Activated CD4-positive, alpha-beta memory T cell treated with anti-CD3 and anti-CD28 coated beads for 36 hours (primary cell): ENCODE measurements at regions of chr17 and their contacts with region 1.

Region 1: DNA sequence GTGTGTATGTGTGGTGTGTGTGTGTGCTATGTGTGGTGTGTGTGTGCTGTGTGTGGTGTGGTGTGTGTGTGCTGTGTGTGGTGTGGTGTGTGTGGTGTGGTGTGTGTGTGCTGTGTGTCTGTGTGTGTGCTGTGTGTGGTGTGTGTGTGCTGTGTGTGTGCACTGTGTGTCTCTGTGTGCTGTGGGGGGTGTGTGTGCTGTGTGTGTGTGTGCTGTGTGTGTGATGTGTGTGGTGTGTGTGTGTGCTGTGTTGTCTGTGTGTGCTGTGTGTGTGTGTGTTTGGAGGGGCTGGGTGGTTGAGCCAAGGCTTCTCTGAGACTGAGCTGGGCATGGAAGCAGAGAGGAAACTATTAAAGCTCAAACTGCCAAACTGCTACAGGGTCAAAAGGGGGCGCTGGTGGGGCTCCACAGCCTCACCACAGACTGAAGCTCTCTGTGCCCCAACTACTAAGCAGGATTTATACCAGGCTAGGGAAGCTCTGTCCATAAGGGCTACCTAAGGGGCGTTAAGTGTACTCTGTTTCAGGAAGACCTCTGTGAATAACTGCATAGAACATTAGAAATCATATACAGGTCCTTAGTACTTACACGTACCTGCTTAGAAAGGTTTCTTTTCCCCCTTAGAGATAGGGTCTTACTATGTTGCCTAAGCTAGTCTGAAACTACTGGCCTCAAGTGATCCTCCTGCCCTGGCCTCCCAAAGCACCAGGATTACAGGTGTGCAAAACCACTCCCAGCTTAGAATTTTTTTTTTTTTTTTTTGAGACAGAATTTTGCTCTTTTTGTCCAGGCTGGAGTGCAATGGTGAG is 27.8 kb upstream of the GHDC start:
- DNase-seq: peak; percentile 67
- H3K4me3 Mint-ChIP-seq: no peak overlapping the region
- H3K27ac Mint-ChIP-seq: peak overlapping the region; percentile 44
- H3K4me1 Mint-ChIP-seq: peaks cover 3% of the 10 kb centered on the region
- H3K27me3 Mint-ChIP-seq: no peaks in the 10 kb centered on the region

Region 2: DNA sequence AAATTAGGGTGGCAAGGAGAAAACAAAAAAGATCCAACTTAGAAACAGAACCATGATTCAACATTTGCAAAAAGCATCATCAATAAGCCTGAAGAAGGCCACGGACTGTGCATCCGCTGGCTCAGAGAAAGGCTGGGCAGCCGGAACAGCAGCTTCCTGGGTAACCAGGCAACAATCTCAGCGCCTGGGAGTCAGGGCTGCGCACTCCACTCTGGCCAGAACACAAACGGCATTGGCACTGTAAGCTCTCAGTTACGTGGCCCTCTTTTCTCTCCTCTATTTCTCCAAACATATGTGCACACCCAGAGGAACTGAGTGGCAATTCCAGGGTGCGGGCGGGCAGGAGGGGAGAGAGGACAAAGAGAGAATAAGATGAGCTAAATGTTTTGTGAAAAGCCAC is 21.4 kb before region 1 on chr17:
- CTCF ChIA-PET with region 1: interaction called, 11 read pairs
- POLR2A ChIA-PET with region 1: no interaction called
- intact Hi-C with region 1: no loop called
- DNase-seq: no peak
- H3K4me3 Mint-ChIP-seq: no peak overlapping the region
- H3K27ac Mint-ChIP-seq: no peak overlapping the region
- H3K4me1 Mint-ChIP-seq: no peaks in the 10 kb centered on the region
- H3K27me3 Mint-ChIP-seq: no peaks in the 10 kb centered on the region

Region 3: DNA sequence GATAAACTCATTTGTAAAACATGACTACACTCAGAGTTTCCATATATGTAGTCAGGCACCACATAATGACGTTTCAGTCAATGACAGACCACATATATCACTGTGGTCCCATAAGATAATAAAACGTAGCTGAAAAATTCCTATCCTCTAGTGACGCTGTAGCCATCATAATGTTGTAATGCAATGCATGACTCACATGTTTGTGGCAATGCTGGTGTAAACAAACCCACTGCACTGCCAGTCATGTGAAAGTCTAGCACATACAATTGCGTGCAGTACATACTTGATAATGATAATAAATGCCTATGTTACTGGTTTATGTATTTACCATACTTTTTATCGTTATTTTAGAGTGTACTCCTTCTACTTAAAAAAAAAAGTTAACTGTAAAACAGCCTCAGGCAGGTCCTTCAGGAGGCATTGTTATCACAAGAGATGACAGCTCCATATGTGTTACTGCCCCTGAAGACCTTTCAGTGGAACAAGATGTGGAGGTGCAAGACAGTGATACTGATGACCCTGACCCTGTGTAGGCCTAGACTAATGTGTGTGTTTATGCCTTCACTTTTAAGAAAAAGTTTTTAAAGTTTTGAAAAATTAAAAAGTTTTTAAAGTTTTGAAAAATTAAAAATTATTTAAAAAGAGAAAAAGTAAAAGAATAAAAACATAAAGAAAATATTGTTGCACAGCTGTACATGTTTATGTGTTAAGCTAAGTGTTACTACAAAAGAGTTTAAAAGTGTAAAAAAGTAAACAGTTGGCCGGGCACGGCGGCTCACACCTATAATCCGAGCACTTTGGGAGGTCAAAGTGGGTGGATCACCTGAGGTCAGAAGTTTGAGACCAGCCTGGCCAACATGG is 45.0 kb after region 1 on chr17:
- CTCF ChIA-PET with region 1: interaction called, 25 read pairs
- POLR2A ChIA-PET with region 1: interaction called, 6 read pairs
- intact Hi-C with region 1: no loop called
- DNase-seq: peak; percentile 66
- H3K4me3 Mint-ChIP-seq: peak overlapping the region; percentile 21
- H3K27ac Mint-ChIP-seq: peak overlapping the region; percentile 97
- H3K4me1 Mint-ChIP-seq: peaks cover 57% of the 10 kb centered on the region
- H3K27me3 Mint-ChIP-seq: no peaks in the 10 kb centered on the region

Region 4: GRCh38 chr17:42287926-42288802 is 66.0 kb after region 1 on chr17 and contains the start of gene STAT5A:
- CTCF ChIA-PET with region 1: interaction called, 87 read pairs
- POLR2A ChIA-PET with region 1: interaction called, 16 read pairs
- intact Hi-C with region 1: loop called (anchors 1 kb)
- DNase-seq: peak; percentile 86
- H3K4me3 Mint-ChIP-seq: peak within 1 kb of the TSS; percentile 82
- H3K27ac Mint-ChIP-seq: peak within 1 kb of the TSS; percentile 94
- H3K4me1 Mint-ChIP-seq: peaks cover 60% of the 10 kb centered on the region
- H3K27me3 Mint-ChIP-seq: no peaks in the 10 kb centered on the region
- total RNA-seq, gene STAT5A: 211 to 215 TPM

Region 5: DNA sequence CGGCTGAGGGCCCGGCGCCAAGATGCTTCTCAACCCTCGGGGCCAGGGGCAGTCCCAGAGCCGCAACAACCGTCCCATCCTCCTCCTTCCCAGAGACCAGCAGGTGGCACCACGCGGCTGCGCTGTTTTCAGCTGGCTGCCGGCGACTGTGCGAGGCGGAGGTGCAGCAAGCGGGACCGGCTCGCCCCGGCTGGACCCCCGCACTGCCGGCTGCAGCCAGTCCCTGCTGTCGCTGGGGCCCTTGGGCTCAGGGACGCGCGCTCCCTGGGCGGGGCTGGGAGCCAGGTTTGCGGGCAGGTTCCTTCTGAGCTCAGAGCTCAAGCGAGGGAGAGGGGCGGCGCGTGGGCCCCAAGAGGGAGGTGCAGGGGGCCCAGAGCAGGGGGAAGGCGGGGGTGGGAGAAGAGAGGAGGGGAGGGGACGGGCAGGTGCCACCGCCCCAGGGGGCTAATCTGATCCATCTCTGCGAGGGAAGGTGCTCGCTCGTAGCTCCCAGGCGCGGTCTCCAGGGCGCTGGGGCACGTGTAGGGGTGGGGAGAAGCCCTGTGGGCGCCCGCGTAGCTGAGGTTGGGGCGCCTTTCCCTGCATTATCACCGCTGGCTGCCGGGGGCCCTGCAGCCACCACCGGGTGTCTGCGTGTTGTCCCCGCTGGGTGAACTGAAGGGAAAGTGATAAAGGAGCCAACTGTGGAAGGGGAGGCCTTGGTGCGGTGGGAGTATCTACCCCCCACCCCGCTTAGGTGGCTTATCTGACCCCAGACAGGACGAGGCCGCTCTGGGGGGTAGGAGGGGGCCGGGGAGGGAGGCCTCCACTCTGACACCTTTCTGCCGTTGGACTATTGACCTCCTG is 90.4 kb after region 1 on chr17:
- CTCF ChIA-PET with region 1: interaction called, 65 read pairs
- POLR2A ChIA-PET with region 1: interaction called, 19 read pairs
- intact Hi-C with region 1: no loop called
- DNase-seq: peak; percentile 92
- H3K4me3 Mint-ChIP-seq: peak overlapping the region; percentile 42
- H3K27ac Mint-ChIP-seq: peak overlapping the region; percentile 74
- H3K4me1 Mint-ChIP-seq: peaks cover 76% of the 10 kb centered on the region
- H3K27me3 Mint-ChIP-seq: no peaks in the 10 kb centered on the region

Region 6: DNA sequence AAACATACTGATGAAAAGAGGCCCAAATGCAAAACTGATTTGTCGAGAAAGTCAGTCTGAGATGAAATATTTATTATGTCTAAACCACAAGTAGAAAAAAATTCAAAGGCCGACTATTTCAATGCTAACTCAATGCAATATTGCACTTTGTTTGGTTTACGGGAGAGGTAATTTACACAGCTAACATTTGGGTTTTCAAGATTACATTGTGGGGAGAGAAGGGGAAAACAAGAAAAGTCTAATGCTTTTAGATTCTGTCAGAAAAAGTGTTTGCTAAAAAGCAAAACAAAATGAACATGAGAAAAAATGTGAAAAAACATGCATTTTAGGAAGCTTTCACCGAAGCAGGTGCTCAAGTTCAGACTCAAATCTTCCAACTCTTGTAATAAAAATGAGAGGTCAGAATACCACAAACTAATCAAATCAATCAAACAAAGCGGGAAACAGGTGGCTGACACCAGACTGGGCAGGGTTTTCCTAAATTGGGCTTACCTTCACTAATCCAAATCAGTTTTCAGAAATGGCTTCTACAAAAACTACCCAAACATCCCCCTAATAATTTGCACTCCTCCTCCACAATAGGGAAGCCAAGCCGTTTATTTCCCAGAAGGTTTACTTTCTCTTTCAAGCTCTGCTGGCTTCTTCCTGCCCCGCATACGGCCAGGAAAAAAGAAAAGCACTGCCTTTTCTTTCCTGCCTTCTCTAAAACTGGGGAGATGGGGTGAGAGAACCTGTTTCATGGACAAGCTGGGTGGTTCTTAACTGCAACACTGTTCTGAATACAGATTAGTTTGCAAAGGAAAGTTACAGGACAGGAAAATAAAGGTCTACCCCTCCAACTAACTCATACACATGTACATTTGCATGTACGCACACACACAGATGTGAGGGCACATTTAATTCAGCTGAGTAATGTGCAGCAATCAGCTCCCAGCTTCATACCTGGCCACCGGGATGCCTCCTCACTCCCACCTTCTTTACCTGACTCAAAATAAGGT is 156.8 kb after region 1 on chr17:
- CTCF ChIA-PET with region 1: no interaction called
- POLR2A ChIA-PET with region 1: no interaction called
- intact Hi-C with region 1: no loop called
- DNase-seq: peak; percentile 48
- H3K4me3 Mint-ChIP-seq: peak overlapping the region; percentile 75
- H3K27ac Mint-ChIP-seq: peak overlapping the region; percentile 91
- H3K4me1 Mint-ChIP-seq: peaks cover 67% of the 10 kb centered on the region
- H3K27me3 Mint-ChIP-seq: no peaks in the 10 kb centered on the region